Mammary epithelial cell (primary cell): ENCODE measurements at regions of chr12 and their contacts with region 1.

Region 1: DNA sequence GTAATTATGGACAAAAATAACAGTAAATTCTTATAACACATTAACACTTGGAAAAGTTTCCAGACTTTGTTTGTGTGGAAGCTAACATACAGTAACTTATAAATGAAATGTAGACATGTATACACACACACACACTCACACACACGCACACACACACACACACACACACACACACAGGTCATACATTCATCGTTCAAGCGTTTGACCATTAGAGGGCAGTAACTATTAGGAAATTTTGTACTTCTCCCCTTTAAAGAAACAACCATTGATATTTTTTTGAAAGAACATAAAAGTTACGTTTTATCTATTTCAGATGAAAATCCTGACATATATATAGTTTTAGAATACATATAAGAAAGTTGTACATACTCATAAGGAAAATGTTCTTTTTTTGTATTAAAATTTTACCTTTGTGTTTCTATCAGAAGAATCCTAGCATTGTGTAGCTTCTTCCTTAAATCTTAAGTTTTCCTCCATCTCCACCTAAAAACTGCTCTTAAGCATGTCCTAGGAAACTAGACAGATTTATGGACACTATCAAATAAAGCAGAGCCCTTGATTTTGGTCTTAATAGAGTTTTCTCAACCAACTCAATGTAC is 29.0 kb downstream of the PTPRQ start:
- DNase-seq: peak; percentile 62
- H3K4me3 ChIP-seq: no peak overlapping the region
- H3K27ac ChIP-seq: no peak overlapping the region
- H3K4me1 ChIP-seq: no peaks in the 10 kb centered on the region
- H3K27me3 ChIP-seq: no peaks in the 10 kb centered on the region
- CTCF ChIP-seq: peak; percentile 62 to 64

Region 2: DNA sequence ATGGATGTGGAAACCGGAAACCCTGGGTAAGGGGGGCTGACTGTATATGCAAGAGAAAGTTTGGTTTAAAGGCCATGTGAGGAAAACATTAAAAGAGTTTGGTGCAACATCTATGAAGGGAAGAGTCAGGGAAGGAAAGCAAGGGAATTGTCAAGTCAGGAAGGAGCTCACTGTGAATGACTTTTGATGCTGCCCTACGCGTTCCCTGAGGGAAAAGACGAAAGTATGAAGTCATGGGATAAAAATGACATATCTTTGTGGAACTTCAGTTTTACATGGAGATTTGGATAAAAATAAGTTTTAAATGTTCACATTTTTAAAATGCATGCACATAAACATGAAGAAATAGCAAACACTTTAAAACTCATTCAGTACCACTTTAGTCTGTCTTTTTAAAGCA is 129.2 kb before region 1 on chr12:
- CTCF ChIA-PET with region 1: no interaction called
- dilution Hi-C with region 1: no loop called
- in situ Hi-C with region 1: no loop called
- intact Hi-C with region 1: no loop called
- DNase-seq: no peak
- H3K4me3 ChIP-seq: no peak overlapping the region
- H3K27ac ChIP-seq: no peak overlapping the region
- H3K4me1 ChIP-seq: no peaks in the 10 kb centered on the region
- H3K27me3 ChIP-seq: peaks cover 2% of the 10 kb centered on the region
- CTCF ChIP-seq: no peak

Region 3: DNA sequence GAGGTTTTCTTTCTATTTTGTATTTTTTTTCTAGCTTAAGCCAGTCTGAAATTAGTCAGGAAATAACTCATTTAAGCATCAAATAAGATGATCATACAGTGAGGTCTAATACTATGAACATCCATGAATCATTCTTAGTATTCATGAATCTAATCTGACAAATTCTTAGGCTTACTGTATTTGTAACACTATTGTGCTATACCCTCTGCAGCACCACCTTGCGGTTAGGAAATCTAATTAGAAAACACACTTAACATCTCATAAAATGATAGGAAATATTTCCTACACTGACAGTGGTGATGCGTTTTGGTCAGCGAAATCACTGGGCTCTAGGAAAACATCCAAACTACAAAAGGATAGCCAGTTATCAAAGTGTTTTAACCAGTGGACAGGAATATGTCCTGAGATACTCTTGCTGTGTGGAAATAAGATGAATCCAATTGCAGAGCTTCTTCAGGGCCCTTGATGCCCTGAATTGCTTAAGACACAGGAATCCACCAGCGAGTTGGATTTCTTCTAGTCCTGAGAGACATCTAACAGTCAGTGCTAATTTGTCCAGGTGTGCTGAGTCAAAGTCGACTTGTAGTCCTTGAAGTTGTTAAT is 125.1 kb after region 1 on chr12:
- CTCF ChIA-PET with region 1: interaction called, 6 read pairs
- dilution Hi-C with region 1: no loop called
- in situ Hi-C with region 1: loop called in 1 of 2 experiments (anchors 10 kb)
- intact Hi-C with region 1: loop called (anchors 1 kb)
- DNase-seq: peak; percentile 53
- H3K4me3 ChIP-seq: no peak overlapping the region
- H3K27ac ChIP-seq: no peak overlapping the region
- H3K4me1 ChIP-seq: peaks cover 4% of the 10 kb centered on the region
- H3K27me3 ChIP-seq: no peaks in the 10 kb centered on the region
- CTCF ChIP-seq: peak; percentile 49 to 64

Region 4: GRCh38 chr12:80607361-80608135 is 134.5 kb after region 1 on chr12:
- CTCF ChIA-PET with region 1: no interaction called
- dilution Hi-C with region 1: no loop called
- in situ Hi-C with region 1: loop called in 1 of 2 experiments (anchors 10 kb)
- intact Hi-C with region 1: no loop called
- DNase-seq: no peak
- H3K4me3 ChIP-seq: no peak overlapping the region
- H3K27ac ChIP-seq: no peak overlapping the region
- H3K4me1 ChIP-seq: no peaks in the 10 kb centered on the region
- H3K27me3 ChIP-seq: no peaks in the 10 kb centered on the region
- CTCF ChIP-seq: peak; percentile 40 to 50

Region 5: DNA sequence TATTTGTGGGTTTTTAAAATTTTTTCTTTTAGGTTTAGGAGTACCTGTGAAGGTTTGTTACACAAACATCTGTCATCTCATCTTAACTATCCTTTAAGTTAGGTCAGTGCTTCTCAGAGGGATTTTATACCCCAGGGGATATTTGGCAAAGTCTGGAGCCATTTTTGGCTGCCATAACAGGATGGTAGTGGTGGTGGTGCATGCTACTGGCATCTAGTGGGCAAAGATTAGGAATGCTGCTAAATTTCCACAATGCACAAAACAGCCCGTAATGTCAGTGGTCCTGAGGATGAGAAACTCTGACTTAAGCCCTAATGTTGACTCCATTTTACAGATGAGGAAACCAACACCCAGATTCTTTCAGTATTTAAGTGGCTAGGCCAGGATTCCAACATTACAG is 149.3 kb after region 1 on chr12:
- CTCF ChIA-PET with region 1: no interaction called
- dilution Hi-C with region 1: no loop called
- in situ Hi-C with region 1: no loop called
- intact Hi-C with region 1: loop called (anchors 10 kb)
- DNase-seq: no peak
- H3K4me3 ChIP-seq: no peak overlapping the region
- H3K27ac ChIP-seq: no peak overlapping the region
- H3K4me1 ChIP-seq: no peaks in the 10 kb centered on the region
- H3K27me3 ChIP-seq: no peaks in the 10 kb centered on the region
- CTCF ChIP-seq: peak; percentile 22 to 27

Region 6: GRCh38 chr12:80763874-80764273 is 290.9 kb after region 1 on chr12:
- CTCF ChIA-PET with region 1: no interaction called
- dilution Hi-C with region 1: no loop called
- in situ Hi-C with region 1: no loop called
- intact Hi-C with region 1: loop called (anchors 2 kb)
- DNase-seq: peak; percentile 16
- H3K4me3 ChIP-seq: no peak overlapping the region
- H3K27ac ChIP-seq: no peak overlapping the region
- H3K4me1 ChIP-seq: no peaks in the 10 kb centered on the region
- H3K27me3 ChIP-seq: peaks cover 4% of the 10 kb centered on the region
- CTCF ChIP-seq: peak; percentile 39 to 64

Region 7: GRCh38 chr12:80807640-80808288 is 334.8 kb after region 1 on chr12:
- CTCF ChIA-PET with region 1: no interaction called
- dilution Hi-C with region 1: no loop called
- in situ Hi-C with region 1: no loop called
- intact Hi-C with region 1: no loop called
- DNase-seq: no peak
- H3K4me3 ChIP-seq: no peak overlapping the region
- H3K27ac ChIP-seq: no peak overlapping the region
- H3K4me1 ChIP-seq: no peaks in the 10 kb centered on the region
- H3K27me3 ChIP-seq: no peaks in the 10 kb centered on the region
- CTCF ChIP-seq: no peak